Tibial artery (tissue), 4 donors: ENCODE measurements at regions of chr4 and their contacts with region 1.

Region 1: DNA sequence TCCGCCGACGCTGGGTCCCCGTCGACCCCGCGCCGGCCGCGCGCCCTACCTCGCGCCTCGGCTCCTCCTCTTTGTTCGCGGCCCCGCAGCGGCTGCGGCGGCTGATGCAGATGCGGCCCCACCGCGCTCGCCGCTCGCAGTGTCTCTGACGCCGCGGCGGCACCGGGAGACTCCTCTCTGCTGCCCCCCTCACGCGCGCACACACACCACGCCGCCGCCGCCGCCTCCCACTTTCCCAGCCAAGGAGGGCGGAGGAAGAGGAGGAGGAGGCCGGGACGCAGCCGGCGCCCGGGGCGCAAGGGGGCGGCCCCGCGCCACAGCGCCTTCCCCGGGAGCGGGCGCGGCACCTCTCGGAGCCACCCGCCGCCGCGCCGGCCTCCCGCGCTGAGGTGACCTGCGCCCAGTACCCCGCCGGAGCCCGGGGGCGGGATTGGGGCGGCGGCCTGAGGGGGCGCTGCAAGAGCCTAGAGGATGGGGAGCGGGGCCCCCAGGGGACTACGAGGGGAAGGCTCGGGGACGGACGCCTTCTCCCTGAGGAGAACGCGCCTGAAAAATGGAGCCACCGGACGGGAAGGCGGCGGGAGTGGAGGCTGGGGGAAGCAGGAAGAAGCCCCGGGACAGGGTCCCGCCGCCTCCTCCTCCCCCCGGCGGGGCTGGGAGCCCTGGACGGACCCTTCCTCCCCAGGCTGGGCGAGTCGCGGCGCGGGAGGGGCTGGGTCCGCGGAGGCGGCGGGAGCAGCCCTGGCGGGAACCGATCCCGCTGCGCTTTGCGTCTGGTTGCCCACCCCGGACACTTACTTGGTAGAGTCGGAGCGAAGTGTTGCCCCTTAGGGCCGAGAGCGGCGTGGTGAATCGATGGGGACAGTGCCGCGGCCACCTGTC is at the start of gene SH3RF1:
- DNase-seq: peak; percentile 93 to 95
- H3K4me3 ChIP-seq: peak within 1 kb of the TSS; percentile 67 to 70
- H3K27ac ChIP-seq: peak within 1 kb of the TSS; percentile 86 to 91
- H3K4me1 ChIP-seq: peaks cover 0 to 51% (median 16%) of the 10 kb centered on the region in 4 donors
- H3K27me3 ChIP-seq: no peaks in the 10 kb centered on the region
- CTCF ChIP-seq: peak; percentile 19 to 29

Region 2: DNA sequence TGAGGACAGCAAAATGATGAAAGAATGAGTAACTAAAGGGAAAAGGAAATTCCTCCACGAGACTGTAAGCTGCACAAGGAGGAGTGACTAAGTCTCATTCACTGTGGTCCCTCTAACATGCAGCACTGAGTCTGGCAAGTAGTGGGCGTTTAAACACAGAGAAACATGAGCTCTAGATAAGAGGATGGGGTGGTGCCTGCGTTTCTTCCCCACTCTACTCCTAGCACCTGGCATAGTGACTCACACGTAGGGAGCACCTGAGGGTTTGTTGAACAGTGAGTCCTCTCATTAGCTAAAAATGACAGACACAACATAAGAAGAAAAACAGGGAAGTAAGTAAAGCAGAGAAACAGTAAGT is 155.2 kb before region 1 on chr4:
- intact Hi-C with region 1: loop called (anchors 10 kb)
- DNase-seq: no peak
- H3K4me3 ChIP-seq: no peak overlapping the region
- H3K27ac ChIP-seq: no peak overlapping the region
- H3K4me1 ChIP-seq: peaks cover 0 to 15% (median 8%) of the 10 kb centered on the region in 4 donors
- H3K27me3 ChIP-seq: no peaks in the 10 kb centered on the region
- CTCF ChIP-seq: no peak

Region 3: GRCh38 chr4:169311643-169312365 is 40.8 kb after region 1 on chr4:
- intact Hi-C with region 1: no loop called
- DNase-seq: no peak
- H3K4me3 ChIP-seq: no peak overlapping the region
- H3K27ac ChIP-seq: no peak overlapping the region
- H3K4me1 ChIP-seq: peaks cover 0 to 17% (median 11%) of the 10 kb centered on the region in 4 donors
- H3K27me3 ChIP-seq: no peaks in the 10 kb centered on the region
- CTCF ChIP-seq: peak; percentile 43 to 48

Region 4: GRCh38 chr4:169530048-169530447 is 259.0 kb after region 1 on chr4:
- intact Hi-C with region 1: no loop called
- DNase-seq: no peak
- H3K4me3 ChIP-seq: no peak overlapping the region
- H3K27ac ChIP-seq: no peak overlapping the region
- H3K4me1 ChIP-seq: no peaks in the 10 kb centered on the region
- H3K27me3 ChIP-seq: no peaks in the 10 kb centered on the region
- CTCF ChIP-seq: no peak